HCT116 (cell line): ENCODE measurements at regions of chr12 and their contacts with region 1.

Region 1: GRCh38 chr12:49967042-49967776 is 5.5 kb downstream of the AQP5 start:
- DNase-seq: peak; percentile 71
- ATAC-seq: peak; percentile 85
- H3K4me3 ChIP-seq: peak overlapping the region; percentile 38 to 56
- H3K27ac ChIP-seq: peak overlapping the region; percentile 53; the same call in 1 of the 2 replicates
- H3K4me1 ChIP-seq: peaks cover 10 to 30% of the 10 kb centered on the region in 2 experiments
- H3K27me3 ChIP-seq: 0 out of 2 replicates have a peak, but pooled peaks cover 5% of the 10 kb centered on the region
- CTCF ChIP-seq: peak; percentile 82 to 92 (median 84)
- POLR2A ChIP-seq: no peak
- RAD21 ChIP-seq: peak; percentile 91

Region 2: GRCh38 chr12:49776413-49776812 is 190.8 kb before region 1 on chr12:
- CTCF ChIA-PET with region 1: interaction called, 13 read pairs
- POLR2A ChIA-PET with region 1: no interaction called
- RAD21 ChIA-PET with region 1: interaction called in 1 of 2 experiments, 3 read pairs
- intact Hi-C with region 1: loop called (anchors 10 kb)
- DNase-seq: peak; percentile 72
- ATAC-seq: peak; percentile 91
- H3K4me3 ChIP-seq: no peak overlapping the region
- H3K27ac ChIP-seq: no peak overlapping the region
- H3K4me1 ChIP-seq: peaks cover 0 to 9% of the 10 kb centered on the region in 2 experiments; a peak in 3 of 4 replicates
- H3K27me3 ChIP-seq: peaks cover 4% of the 10 kb centered on the region; the same call in 1 of the 2 replicates
- CTCF ChIP-seq: peak; percentile 79 to 93 (median 80)
- POLR2A ChIP-seq: no peak
- RAD21 ChIP-seq: peak; percentile 95

Region 3: DNA sequence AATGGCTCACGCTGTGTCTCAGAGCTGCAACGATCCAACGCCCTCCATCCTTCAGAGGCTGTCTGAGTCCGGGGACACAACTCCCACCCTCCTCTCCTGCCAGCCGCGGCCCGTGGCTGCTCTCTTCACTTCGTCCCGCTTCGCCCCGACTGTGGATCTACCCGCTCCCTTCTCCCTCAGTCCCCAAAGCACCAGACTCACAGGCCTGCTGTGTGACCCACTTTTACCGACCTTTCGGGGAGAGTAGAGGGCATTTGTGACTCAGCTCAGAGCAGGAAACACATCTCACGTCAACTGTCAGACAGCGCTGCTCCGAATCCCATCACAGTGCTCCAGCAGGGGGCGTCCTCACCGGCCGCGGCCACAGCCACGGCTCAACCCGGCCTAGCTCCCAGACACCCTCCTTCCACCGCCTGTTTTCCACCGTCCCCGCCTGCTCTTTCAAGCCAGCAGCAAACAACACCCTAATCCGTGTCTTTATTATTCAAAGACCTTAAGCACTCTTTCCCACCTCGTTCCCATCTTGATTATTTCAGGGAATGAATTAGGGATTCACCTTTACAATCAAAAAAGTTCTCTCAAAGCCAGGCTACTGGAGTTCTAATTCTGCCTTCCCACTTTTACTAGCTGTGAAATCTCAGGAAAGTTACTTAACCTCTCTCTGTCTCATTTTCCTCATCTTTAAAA is 21.7 kb before region 1 on chr12:
- CTCF ChIA-PET with region 1: interaction called, 45 read pairs
- POLR2A ChIA-PET with region 1: no interaction called
- RAD21 ChIA-PET with region 1: interaction called in 1 of 2 experiments, 4 read pairs
- intact Hi-C with region 1: no loop called
- DNase-seq: peak; percentile 62
- ATAC-seq: peak; percentile 99
- H3K4me3 ChIP-seq: no peak overlapping the region
- H3K27ac ChIP-seq: no peak overlapping the region
- H3K4me1 ChIP-seq: peaks cover 3 to 13% of the 10 kb centered on the region in 2 experiments; a peak in 3 of 4 replicates
- H3K27me3 ChIP-seq: no peaks in the 10 kb centered on the region
- CTCF ChIP-seq: peak; percentile 76 to 93 (median 89)
- POLR2A ChIP-seq: no peak
- RAD21 ChIP-seq: peak; percentile 64

Region 4: DNA sequence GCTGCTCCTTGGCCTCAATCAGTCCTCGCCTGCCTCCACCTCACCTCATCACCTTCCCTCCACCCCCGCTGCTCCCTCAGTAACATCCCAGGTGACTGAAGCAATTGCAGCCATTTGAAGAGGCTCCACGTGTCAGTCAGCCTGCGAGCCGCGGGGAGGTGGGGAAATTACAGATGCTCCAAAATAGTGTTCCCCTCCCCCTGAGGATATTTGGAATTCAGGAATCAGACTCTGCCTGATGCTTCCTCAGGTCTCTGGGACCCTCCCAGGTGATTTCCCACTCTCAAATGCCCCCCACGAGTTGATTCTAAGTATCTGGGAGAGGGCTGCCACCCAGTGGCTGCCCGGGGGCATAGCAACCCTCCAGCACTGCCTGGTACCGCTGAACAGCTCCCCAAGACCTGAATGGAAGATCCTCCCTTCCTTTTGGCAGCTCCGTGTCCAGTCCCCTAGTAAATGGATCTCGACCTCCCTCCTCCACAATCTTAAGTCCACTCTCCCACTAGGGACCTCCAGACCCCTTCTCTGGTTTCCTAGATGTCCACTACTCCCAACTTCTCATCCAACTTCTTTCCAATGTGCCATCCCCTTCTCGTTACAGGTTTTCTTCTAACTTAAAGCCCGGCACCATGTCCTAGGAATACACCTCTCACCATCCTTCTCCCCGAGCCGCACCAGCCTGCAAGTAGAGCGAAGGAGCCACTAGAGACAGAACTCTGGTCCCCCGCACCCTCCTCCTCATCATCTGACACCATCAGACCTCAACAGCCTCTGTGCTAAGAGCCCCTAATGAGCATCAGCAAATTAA is 88.8 kb after region 1 on chr12:
- CTCF ChIA-PET with region 1: interaction called, 39 read pairs
- POLR2A ChIA-PET with region 1: no interaction called
- RAD21 ChIA-PET with region 1: interaction called, 5 to 8 read pairs
- intact Hi-C with region 1: loop called (anchors 1 kb)
- DNase-seq: peak; percentile 48
- ATAC-seq: peak; percentile 61
- H3K4me3 ChIP-seq: no peak overlapping the region
- H3K27ac ChIP-seq: no peak overlapping the region; the same call in 1 of the 2 replicates
- H3K4me1 ChIP-seq: peaks cover 15 to 25% of the 10 kb centered on the region in 2 experiments; a peak in 3 of 4 replicates
- H3K27me3 ChIP-seq: no peaks in the 10 kb centered on the region; the same call in 1 of the 2 replicates
- CTCF ChIP-seq: peak; percentile 91 to 98 (median 96)
- POLR2A ChIP-seq: no peak
- RAD21 ChIP-seq: peak; percentile 90

Region 5: GRCh38 chr12:50074936-50075807 is 108.0 kb after region 1 on chr12:
- CTCF ChIA-PET with region 1: interaction called, 65 read pairs
- POLR2A ChIA-PET with region 1: no interaction called
- RAD21 ChIA-PET with region 1: interaction called, 6 to 9 read pairs
- intact Hi-C with region 1: loop called (anchors 1 kb)
- DNase-seq: peak; percentile 42
- ATAC-seq: peak; percentile 95
- H3K4me3 ChIP-seq: no peak overlapping the region
- H3K27ac ChIP-seq: no peak overlapping the region
- H3K4me1 ChIP-seq: peaks cover 0 to 14% of the 10 kb centered on the region in 2 experiments; a peak in 1 of 4 replicates
- H3K27me3 ChIP-seq: no peaks in the 10 kb centered on the region
- CTCF ChIP-seq: peak; percentile 81 to 93 (median 91)
- POLR2A ChIP-seq: no peak
- RAD21 ChIP-seq: peak; percentile 97

Region 6: DNA sequence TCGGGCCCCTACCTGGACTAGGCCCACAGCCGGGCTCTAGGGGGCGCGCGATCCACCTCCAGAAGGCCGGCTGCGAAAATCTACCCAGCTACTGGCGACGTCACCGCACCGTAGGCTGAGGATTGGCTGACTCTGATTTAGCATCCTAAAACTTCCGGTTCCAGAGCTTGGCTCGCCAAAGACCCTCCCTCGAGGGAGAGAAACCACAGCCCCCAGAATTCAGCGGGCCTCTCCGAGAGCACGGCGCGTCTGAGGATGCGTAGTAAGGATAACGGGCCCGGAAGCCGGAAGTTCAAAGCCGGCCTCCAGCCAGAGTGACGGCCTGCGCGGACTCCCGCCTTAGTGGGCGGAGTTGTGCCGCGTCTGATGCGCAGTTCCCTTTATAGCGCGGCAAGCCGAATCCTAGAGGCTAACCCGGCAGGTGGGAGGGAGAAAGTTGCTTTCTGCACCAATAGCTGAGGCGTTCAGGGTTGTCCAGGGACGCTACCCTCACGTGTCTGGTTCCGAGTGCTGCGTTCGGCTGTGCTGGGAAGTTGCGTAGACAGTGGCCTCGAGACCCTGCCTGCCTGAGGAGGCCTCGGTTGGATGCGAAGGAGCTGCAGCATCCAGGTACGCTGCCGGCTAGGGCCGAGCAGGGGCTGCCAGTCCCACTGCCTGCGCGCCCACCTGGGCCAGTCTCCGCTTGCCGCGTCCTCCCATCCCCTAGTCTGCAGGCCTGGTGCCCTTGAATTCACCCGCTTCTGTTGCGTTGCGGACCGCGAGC is 144.7 kb after region 1 on chr12 and contains the start of gene COX14:
- CTCF ChIA-PET with region 1: interaction called, 14 read pairs
- POLR2A ChIA-PET with region 1: no interaction called
- RAD21 ChIA-PET with region 1: no interaction called
- intact Hi-C with region 1: no loop called
- DNase-seq: peak; percentile 99
- ATAC-seq: peak; percentile 90
- H3K4me3 ChIP-seq: peak within 1 kb of the TSS; percentile 93 to 99
- H3K27ac ChIP-seq: peak within 1 kb of the TSS; percentile 77
- H3K4me1 ChIP-seq: peaks cover 20 to 22% of the 10 kb centered on the region in 2 experiments
- H3K27me3 ChIP-seq: no peaks in the 10 kb centered on the region
- CTCF ChIP-seq: peak; percentile 83 to 94 (median 91); a peak in 5 of 6 replicates
- POLR2A ChIP-seq: peak; percentile 78
- RAD21 ChIP-seq: peak; percentile 70
- total RNA-seq, gene COX14: 41.0 TPM